Activated B cell treated with CpG ODN at 0.5 μM for 24 hours (primary cell): ENCODE measurements at regions of chr1 and their contacts with region 1.

Region 1: DNA sequence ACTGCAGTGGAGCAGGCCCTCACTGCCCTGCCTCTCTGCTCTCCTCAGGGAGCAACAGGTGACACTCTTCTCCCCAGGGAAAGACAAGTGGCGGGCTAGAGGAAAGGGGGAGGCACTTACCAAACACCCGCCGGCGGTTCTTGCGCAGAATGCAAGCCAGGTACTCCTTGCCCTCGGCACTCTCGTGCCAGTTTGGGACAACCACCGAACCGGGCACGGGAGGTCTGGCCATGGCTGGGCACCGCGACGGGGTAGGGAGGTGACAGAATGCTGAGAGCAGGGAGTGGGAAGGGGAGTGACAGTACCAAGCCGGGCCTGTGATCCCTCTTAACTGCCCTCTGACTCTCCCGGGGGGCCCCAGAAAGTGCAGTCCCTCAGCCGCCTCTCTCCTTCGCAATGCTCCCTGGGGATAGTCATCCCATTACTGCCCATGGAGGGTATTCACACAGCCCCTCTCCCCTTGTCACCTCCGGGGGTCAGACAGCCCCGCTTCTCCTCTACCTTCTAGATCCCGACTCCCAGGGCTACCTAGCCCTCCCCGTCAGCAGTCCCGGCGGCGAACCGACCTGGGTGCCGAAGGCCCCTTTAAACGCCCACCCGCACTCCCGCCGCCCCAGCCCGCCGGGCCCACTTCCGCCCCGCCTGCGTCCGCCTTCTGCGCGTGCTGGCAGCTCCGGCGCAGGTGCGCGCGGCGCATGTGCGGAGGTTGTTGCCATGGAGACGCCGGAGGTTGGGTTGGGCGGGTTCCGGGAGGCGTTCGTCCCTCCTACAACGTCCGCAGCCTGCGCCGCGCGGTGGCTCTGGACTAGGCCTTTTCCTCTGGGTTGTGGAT is at the start of gene CPLANE2:
- DNase-seq: peak; percentile 97
- ATAC-seq: peak; percentile 82
- H3K4me3 Mint-ChIP-seq: peak within 1 kb of the TSS; percentile 90
- H3K27ac Mint-ChIP-seq: peak within 1 kb of the TSS; percentile 95
- H3K4me1 Mint-ChIP-seq: peaks cover 12% of the 10 kb centered on the region
- H3K27me3 Mint-ChIP-seq: no peaks in the 10 kb centered on the region
- CTCF ChIP-seq: no peak
- total RNA-seq, gene CPLANE2: 5.0 and 5.1 TPM in 2 replicates

Region 2: GRCh38 chr1:16217061-16217785 is 19.5 kb before region 1 on chr1:
- CTCF ChIA-PET with region 1: interaction called, 4 read pairs
- POLR2A ChIA-PET with region 1: interaction called, 11 read pairs
- intact Hi-C with region 1: loop called (anchors 1 kb)
- DNase-seq: peak; percentile 88
- ATAC-seq: peak; percentile 99
- H3K4me3 Mint-ChIP-seq: peak overlapping the region; percentile 89
- H3K27ac Mint-ChIP-seq: peak overlapping the region; percentile 41
- H3K4me1 Mint-ChIP-seq: peaks cover 20% of the 10 kb centered on the region
- H3K27me3 Mint-ChIP-seq: peaks cover 4% of the 10 kb centered on the region
- CTCF ChIP-seq: no peak